Activated CD8-positive, alpha-beta T cell treated with anti-CD3 and anti-CD28 coated beads, Interleukin-2, amount 10 ng/mL, durations not matched to agents 7 days and 5 days (primary cell): ENCODE measurements at regions of chr7 and their contacts with region 1.

Region 1: DNA sequence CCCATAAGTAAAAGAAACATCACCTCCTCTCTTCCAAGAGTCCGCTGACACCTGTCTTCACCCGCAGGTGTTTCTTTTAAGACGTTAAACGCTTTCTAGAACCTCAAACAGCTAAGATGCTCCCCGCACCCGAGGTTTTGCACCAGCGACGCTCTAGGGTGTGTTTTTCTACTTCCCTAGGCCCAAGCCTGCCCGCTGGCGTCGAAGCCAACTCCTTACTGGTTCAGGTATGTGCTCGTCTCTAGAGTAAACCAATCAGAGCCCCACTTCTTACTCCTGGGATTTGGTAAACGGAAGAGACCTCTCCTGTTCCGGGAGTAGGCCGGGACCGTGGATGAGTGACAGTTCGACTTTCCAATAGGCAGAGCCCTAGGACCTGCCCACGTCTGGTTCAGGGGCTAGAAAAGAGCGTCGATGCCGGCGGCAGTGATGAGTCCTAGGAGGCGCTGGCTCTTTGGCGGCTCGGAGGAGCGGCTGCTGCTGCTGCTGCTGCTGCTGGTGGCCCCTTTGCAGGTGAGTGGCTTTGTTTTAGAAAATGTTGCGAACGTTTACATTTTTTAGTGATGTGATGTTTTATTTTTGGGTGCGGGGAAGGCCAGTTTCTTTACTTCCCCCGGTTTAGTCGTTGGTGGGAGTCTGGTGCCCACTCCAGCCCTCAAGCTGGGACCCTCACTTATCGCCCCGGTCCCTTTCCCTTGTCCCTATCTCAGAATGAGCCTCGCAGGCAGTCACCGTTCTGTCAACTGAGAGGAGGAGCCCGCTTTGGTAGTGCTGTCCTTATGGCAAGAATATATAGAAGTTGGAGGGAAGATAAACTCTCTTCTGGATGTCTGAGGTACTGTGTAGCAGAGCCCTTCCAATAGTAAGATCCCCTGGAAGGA is at the start of gene BPGM:
- DNase-seq: peak; percentile 98
- ATAC-seq: peak; percentile 99
- H3K4me3 Mint-ChIP-seq: no peak within 1 kb of the TSS
- H3K27ac Mint-ChIP-seq: no peak within 1 kb of the TSS
- H3K4me1 Mint-ChIP-seq: peaks cover 16% of the 10 kb centered on the region
- H3K27me3 Mint-ChIP-seq: no peaks in the 10 kb centered on the region
- total RNA-seq, gene BPGM: 11.9 to 12.2 TPM

Region 2: DNA sequence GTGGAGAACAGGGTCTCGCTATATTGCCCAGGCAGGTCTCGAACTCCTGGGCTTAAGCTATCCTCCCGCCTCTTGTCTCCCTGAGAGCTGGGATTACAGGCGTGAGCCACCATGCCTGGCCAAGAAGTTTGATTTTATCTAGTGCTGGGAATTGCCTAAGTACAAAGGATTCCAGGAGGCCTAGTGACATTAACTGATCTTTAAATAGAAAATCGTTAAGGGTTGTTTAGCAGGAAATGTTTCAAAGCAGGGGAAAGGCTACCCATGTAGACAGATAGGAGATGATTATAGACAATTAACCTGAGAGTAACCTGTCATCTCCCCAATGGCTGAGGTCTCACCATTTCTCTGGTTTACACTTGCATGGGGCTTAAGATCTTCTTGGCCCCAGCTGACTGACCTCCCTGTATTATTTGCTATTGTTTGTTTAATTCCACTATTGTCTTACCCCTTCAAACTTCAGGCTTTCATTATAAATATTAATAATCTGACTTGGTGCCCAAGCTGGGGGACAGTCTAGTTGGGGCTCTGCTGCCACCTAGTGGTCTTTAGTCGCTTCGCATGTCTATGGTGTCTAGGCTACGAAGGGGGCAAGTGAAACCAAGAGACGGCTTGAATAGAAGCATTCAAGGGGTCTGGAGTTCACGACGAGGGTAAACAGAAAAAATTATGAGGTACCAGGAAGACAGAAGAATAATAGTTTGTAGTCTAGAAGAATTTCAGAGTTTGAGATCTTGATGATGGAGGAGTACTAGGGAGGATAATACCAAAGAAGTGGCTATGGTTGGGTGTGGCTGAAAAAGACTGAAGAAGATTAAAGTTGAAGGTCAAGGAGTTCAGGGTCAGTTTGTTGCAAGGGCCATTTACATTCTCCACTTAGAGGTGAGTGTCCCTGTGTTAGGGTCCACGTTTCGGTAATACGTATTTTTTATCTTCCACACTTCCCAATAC is 40.4 kb before region 1 on chr7:
- CTCF ChIA-PET with region 1: interaction called, 10 read pairs
- POLR2A ChIA-PET with region 1: interaction called, 4 read pairs
- DNase-seq: peak; percentile 75
- ATAC-seq: peak; percentile 98
- H3K4me3 Mint-ChIP-seq: peak overlapping the region; percentile 28
- H3K27ac Mint-ChIP-seq: no peak overlapping the region
- H3K4me1 Mint-ChIP-seq: peaks cover 4% of the 10 kb centered on the region
- H3K27me3 Mint-ChIP-seq: peaks cover 33% of the 10 kb centered on the region

Region 3: DNA sequence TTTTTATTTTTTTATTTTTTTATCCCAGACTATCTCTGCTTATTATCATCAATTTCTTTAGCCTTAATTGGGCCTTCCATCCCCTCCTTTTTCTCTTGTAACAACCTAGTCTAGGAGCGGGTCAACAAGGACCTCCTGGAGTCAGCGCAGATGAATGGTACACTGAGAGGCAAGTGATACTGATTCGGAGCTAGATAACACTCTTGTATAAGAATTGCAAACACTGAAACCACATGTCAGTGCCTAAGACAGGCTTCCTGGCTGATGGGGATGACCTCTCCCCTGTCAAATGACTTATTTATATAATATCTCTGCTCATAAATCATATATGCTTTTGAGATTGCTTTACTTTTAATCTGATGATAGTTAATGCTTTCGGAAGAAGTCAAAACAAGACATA is 22.7 kb after region 1 on chr7:
- CTCF ChIA-PET with region 1: interaction called, 4 read pairs
- POLR2A ChIA-PET with region 1: interaction called, 14 read pairs
- DNase-seq: no peak
- ATAC-seq: peak; percentile 44
- H3K4me3 Mint-ChIP-seq: peak overlapping the region; percentile 21
- H3K27ac Mint-ChIP-seq: peak overlapping the region; percentile 41
- H3K4me1 Mint-ChIP-seq: peaks cover 21% of the 10 kb centered on the region
- H3K27me3 Mint-ChIP-seq: no peaks in the 10 kb centered on the region

Region 4: DNA sequence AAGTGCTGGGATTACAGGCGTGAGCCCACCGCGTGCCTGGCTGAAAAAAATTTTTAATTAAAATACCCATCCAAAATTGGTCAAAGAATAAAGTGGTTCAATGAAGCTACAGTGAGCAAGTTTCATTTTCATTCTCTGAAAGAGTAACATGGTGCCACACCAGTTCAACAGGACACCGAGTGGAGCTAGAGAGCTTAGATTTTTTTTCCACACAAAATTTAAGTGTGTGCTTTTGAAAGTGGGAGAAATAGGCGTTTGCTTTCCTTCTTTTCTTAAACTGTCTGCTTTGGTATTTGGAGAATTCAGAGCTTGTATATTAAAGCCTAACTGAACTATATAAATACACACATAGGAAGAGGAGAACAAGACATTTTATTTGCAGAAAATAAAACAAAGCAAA is 43.4 kb after region 1 on chr7:
- CTCF ChIA-PET with region 1: interaction called, 10 read pairs
- POLR2A ChIA-PET with region 1: no interaction called
- DNase-seq: no peak
- ATAC-seq: no peak
- H3K4me3 Mint-ChIP-seq: no peak overlapping the region
- H3K27ac Mint-ChIP-seq: no peak overlapping the region
- H3K4me1 Mint-ChIP-seq: peaks cover 26% of the 10 kb centered on the region
- H3K27me3 Mint-ChIP-seq: peaks cover 2% of the 10 kb centered on the region